HCT116 (cell line): ENCODE measurements at regions of chrX and their contacts with region 1.

Region 1: GRCh38 chrX:9885150-9885549 is 82.0 kb upstream of the CLDN34 start:
- DNase-seq: peak; percentile 16
- ATAC-seq: peak; percentile 90
- H3K4me3 ChIP-seq: no peak overlapping the region
- H3K27ac ChIP-seq: no peak overlapping the region
- H3K4me1 ChIP-seq: no peaks in the 10 kb centered on the region
- H3K27me3 ChIP-seq: no peaks in the 10 kb centered on the region
- CTCF ChIP-seq: peak; percentile 60 to 78 (median 63)
- POLR2A ChIP-seq: no peak
- RAD21 ChIP-seq: peak; percentile 67

Region 2: GRCh38 chrX:8711401-8711800 is 1173.7 kb before region 1 on chrX:
- CTCF ChIA-PET with region 1: no interaction called
- POLR2A ChIA-PET with region 1: no interaction called
- RAD21 ChIA-PET with region 1: no interaction called
- intact Hi-C with region 1: no loop called
- DNase-seq: no peak
- ATAC-seq: no peak
- H3K4me3 ChIP-seq: no peak overlapping the region
- H3K27ac ChIP-seq: no peak overlapping the region
- H3K4me1 ChIP-seq: no peaks in the 10 kb centered on the region
- H3K27me3 ChIP-seq: no peaks in the 10 kb centered on the region
- CTCF ChIP-seq: no peak
- POLR2A ChIP-seq: no peak
- RAD21 ChIP-seq: no peak

Region 3: DNA sequence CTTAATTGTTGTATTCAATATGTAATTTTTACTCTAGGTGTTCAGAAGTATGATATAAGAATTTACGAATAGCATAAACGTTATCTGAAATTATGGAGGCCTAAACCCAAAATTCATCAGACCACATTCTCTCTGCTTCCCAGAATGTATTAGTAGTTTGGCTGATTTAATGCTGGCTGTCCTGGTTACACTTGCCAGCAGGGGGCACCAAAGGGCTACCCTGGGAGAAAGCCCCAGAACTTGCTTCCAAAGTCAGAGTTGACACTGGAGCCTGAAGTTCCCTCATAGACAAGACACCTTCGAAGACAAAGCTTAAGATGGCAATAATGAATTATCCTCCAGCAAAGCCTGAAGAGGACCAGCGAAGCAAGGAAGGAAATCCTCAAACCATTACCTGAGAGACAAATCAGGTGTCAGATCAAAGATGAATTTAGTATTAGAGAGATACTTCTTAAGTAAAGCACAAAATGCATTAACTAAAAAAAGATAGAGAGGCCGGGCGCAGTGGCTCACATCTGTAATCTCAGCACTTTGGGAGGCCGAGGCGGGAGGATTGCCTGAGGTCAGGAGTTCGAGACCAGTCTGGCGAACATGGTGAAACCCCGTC is 1141.9 kb before region 1 on chrX:
- CTCF ChIA-PET with region 1: no interaction called
- POLR2A ChIA-PET with region 1: no interaction called
- RAD21 ChIA-PET with region 1: no interaction called
- intact Hi-C with region 1: loop called (anchors 10 kb)
- DNase-seq: no peak
- ATAC-seq: peak; percentile 49; the same call in 1 of the 2 replicates
- H3K4me3 ChIP-seq: no peak overlapping the region
- H3K27ac ChIP-seq: no peak overlapping the region
- H3K4me1 ChIP-seq: no peaks in the 10 kb centered on the region
- H3K27me3 ChIP-seq: no peaks in the 10 kb centered on the region
- CTCF ChIP-seq: peak; percentile 30 to 53 (median 51); a peak in 5 of 6 replicates
- POLR2A ChIP-seq: no peak
- RAD21 ChIP-seq: peak; percentile 47

Region 4: GRCh38 chrX:9927698-9928482 is 42.7 kb after region 1 on chrX:
- CTCF ChIA-PET with region 1: no interaction called
- POLR2A ChIA-PET with region 1: no interaction called
- RAD21 ChIA-PET with region 1: no interaction called
- intact Hi-C with region 1: no loop called
- DNase-seq: no peak
- ATAC-seq: no peak
- H3K4me3 ChIP-seq: no peak overlapping the region
- H3K27ac ChIP-seq: no peak overlapping the region
- H3K4me1 ChIP-seq: no peaks in the 10 kb centered on the region
- H3K27me3 ChIP-seq: no peaks in the 10 kb centered on the region
- CTCF ChIP-seq: no peak
- POLR2A ChIP-seq: no peak
- RAD21 ChIP-seq: no peak

Region 5: DNA sequence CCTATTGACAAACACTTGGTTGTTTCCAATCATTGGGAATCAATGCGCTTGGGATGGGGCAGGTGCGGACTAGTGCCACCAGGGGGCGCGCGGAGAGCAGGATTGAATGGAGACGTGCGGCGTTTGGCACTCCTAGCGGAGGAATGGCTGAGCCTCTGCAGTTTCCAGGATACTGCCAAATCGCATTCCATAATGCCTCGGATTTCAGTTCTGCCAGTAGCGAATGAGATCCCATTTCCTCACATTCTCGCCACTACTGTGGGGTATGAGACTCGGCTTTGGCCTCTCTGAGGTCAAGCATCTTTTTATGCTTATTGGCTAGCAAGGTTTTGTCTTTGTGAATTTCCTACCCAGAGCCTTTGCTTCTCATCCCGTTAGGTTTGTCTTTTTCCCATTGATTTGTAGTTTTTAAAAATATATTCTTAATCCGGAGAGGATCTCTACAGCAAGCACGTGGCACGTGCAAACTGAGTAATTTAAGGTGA is 110.7 kb after region 1 on chrX:
- CTCF ChIA-PET with region 1: no interaction called
- POLR2A ChIA-PET with region 1: no interaction called
- RAD21 ChIA-PET with region 1: no interaction called
- intact Hi-C with region 1: loop called (anchors 10 kb)
- DNase-seq: peak; percentile 55
- ATAC-seq: peak; percentile 85
- H3K4me3 ChIP-seq: no peak overlapping the region
- H3K27ac ChIP-seq: no peak overlapping the region
- H3K4me1 ChIP-seq: no peaks in the 10 kb centered on the region
- H3K27me3 ChIP-seq: no peaks in the 10 kb centered on the region
- CTCF ChIP-seq: peak; percentile 74 to 99 (median 80)
- POLR2A ChIP-seq: no peak
- RAD21 ChIP-seq: peak; percentile 76